ENCODE measurements at regions of chr5 and their contacts with region 1.

Region 1: DNA sequence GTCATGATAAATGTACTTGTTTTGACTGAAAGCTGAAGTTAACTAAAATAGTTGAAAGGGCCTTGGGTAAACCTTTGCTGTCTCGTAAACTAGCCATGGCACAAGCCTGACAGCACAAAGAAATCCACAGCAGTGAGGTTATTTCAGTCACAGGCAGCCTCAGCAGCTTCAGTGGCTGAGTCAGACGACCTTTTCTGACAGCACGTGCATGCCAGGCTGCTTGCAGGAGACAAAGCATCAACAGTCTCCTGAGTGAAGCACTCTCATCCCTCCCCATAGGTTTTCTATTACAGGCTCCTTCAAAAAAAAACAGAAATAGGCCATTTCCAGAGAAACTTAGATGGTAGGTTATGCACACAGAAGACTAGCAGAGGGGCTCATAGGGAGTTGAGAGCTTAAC is 34.6 kb downstream of the OXCT1 start:
- DNase-seq: peak; percentile 83

Region 2: DNA sequence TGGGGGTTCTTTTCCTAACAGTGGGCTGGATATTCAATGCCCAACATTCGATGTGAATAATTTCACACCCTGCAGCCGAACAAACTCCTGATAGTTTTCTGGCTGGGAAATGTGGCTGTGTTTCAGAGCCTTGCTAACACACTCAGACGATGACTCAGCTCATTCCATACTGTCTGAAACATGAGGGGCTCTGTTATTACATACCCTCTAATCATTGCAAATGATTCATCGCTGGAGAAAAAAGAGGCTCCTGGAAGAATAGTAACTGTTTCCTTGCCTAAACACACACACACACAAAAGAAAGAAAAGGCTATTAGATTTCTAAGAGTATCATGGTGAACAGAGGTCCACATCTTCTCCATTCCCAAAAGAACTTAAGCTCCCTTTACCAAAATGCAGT is 41.2 kb before region 1 on chr5:
- intact Hi-C with region 1: loop called in 1 of 2 experiments (anchors 5 kb)
- DNase-seq: no peak

Region 3: GRCh38 chr5:41809128-41809527 is 26.5 kb before region 1 on chr5:
- intact Hi-C with region 1: no loop called
- DNase-seq: no peak

Measured in posterior vena cava (tissue), 2 donors.